Calu3 (cell line): ENCODE measurements at regions of chr1 and their contacts with region 1.

Region 1: DNA sequence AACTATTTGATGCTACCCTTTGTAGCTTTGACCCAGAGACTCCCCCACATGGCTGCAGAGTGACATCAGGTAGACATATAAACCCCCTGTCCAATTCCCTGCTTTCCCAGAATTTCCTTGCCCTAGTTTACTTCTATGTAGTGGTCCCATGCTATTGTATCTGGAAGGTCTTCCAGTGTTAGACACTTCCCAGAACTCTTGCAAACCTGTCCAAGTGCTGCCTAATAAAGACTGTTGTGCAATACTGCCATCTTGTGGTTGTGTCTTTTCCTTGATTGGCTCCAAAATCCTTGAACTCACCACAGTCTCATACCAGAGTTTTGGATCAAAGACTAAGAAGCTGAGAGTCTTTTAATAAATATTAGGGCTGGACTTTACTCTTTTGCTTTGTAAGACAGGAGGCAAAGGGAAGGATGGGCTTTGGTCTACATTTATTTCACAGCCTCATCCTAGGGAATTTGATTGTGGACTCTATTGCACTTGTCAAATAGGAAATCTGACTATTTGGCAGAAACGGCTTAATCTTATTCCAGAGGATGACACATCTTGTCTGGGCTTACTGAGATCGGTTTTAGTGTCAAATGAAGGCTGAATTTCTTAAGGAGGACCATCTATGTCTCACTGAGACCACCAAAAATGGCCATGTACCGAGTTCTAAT is 169.9 kb downstream of the LRRC7 start:
- DNase-seq: peak; percentile 49
- H3K4me3 Mint-ChIP-seq: no peak overlapping the region
- H3K27ac Mint-ChIP-seq: no peak overlapping the region
- H3K4me1 Mint-ChIP-seq: no peaks in the 10 kb centered on the region
- H3K27me3 Mint-ChIP-seq: no peaks in the 10 kb centered on the region
- CTCF ChIP-seq: peak; percentile 67

Region 2: GRCh38 chr1:68470388-68470970 is 1267.2 kb before region 1 on chr1:
- CTCF ChIA-PET with region 1: interaction called, 4 read pairs
- intact Hi-C with region 1: loop called (anchors 1 kb)
- DNase-seq: peak; percentile 14
- H3K4me3 Mint-ChIP-seq: no peak overlapping the region
- H3K27ac Mint-ChIP-seq: no peak overlapping the region
- H3K4me1 Mint-ChIP-seq: no peaks in the 10 kb centered on the region
- H3K27me3 Mint-ChIP-seq: no peaks in the 10 kb centered on the region
- CTCF ChIP-seq: peak; percentile 34

Region 3: GRCh38 chr1:68820151-68820550 is 917.5 kb before region 1 on chr1:
- CTCF ChIA-PET with region 1: no interaction called
- intact Hi-C with region 1: loop called (anchors 10 kb)
- DNase-seq: no peak
- H3K4me3 Mint-ChIP-seq: no peak overlapping the region
- H3K27ac Mint-ChIP-seq: no peak overlapping the region
- H3K4me1 Mint-ChIP-seq: no peaks in the 10 kb centered on the region
- H3K27me3 Mint-ChIP-seq: no peaks in the 10 kb centered on the region
- CTCF ChIP-seq: no peak

Region 4: DNA sequence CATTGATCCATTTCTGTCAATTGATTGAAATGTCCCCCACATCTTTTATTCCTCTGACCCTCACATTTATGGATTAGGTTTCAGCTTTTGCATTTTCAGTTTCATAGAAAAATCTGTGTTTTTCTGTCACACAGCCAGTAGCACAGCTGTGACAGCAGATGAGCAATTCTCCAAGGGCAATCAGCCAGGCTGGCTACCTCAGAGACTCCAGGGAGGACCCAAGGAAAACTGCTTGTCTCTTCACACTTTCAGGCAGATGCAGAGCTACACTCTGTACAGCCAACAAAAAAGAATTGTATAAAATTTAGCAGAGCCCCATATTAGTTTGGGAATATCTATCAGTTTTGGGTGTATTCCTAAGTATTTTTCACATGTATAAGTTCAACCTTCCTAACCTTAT is 87.3 kb after region 1 on chr1:
- CTCF ChIA-PET with region 1: no interaction called
- intact Hi-C with region 1: no loop called
- DNase-seq: no peak
- H3K4me3 Mint-ChIP-seq: no peak overlapping the region
- H3K27ac Mint-ChIP-seq: no peak overlapping the region
- H3K4me1 Mint-ChIP-seq: no peaks in the 10 kb centered on the region
- H3K27me3 Mint-ChIP-seq: no peaks in the 10 kb centered on the region
- CTCF ChIP-seq: no peak